B cell (primary cell): ENCODE measurements at regions of chr12 and their contacts with region 1.

Region 1: GRCh38 chr12:27821259-27821973 is 41.4 kb upstream of the MANSC4 start:
- DNase-seq: peak; percentile 65
- ATAC-seq: peak; percentile 23
- H3K4me3 ChIP-seq: no peak overlapping the region
- H3K4me3 Mint-ChIP-seq: no peak overlapping the region
- H3K27ac ChIP-seq: peak overlapping the region in 1 of 2 donors; percentile 2
- H3K27ac Mint-ChIP-seq: no peak overlapping the region
- H3K4me1 ChIP-seq: peaks cover 3 to 20% of the 10 kb centered on the region in 2 donors
- H3K4me1 Mint-ChIP-seq: peaks cover 35% of the 10 kb centered on the region
- H3K27me3 ChIP-seq: no peaks in the 10 kb centered on the region
- H3K27me3 Mint-ChIP-seq: peaks cover 9% of the 10 kb centered on the region
- CTCF ChIP-seq: peak; percentile 89

Region 2: DNA sequence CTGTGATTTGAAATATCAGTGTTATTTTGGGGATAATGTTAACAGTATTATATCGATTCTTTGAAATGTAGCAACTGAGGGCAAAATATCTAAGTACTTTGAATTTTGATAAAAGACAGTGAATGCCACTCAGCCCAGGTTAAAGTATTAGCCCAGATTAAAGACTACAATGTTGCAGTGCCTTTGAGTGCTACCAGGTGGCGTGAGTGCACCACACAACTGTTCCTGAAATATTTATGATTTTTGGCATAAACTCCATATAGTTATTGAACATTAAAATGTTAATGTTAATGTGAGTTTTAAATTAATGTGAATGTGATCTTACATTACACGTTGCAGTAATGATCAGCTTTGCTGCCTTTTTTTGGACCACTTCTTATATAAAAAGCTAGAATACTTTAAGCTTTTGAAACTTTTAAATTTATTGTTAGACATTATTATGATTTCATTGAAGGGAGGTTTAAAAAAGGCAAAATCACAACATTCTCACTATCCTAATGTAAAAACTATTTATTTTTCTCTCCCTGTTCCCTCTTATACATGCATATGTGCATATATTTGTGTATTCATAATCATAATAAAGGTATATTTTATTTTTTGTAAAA is 88.3 kb before region 1 on chr12:
- CTCF ChIA-PET with region 1: interaction called, 26 read pairs
- POLR2A ChIA-PET with region 1: no interaction called
- intact Hi-C with region 1: loop called (anchors 1 kb)
- DNase-seq: peak; percentile 39
- ATAC-seq: no peak
- H3K4me3 ChIP-seq: no peak overlapping the region
- H3K4me3 Mint-ChIP-seq: no peak overlapping the region
- H3K27ac ChIP-seq: no peak overlapping the region
- H3K27ac Mint-ChIP-seq: no peak overlapping the region
- H3K4me1 ChIP-seq: no peaks in the 10 kb centered on the region
- H3K4me1 Mint-ChIP-seq: no peaks in the 10 kb centered on the region
- H3K27me3 ChIP-seq: no peaks in the 10 kb centered on the region
- H3K27me3 Mint-ChIP-seq: no peaks in the 10 kb centered on the region
- CTCF ChIP-seq: peak; percentile 82

Region 3: GRCh38 chr12:27779920-27780611 is 41.4 kb before region 1 on chr12 and contains the starts of genes KLHL42 and MANSC4:
- CTCF ChIA-PET with region 1: interaction called, 4 read pairs
- POLR2A ChIA-PET with region 1: no interaction called
- intact Hi-C with region 1: loop called (anchors 1 kb)
- DNase-seq: peak; percentile 83
- ATAC-seq: peak; percentile 86
- H3K4me3 ChIP-seq: peak within 1 kb of the TSS; percentile 39 to 81 (median 67)
- H3K4me3 Mint-ChIP-seq: peak within 1 kb of the TSS; percentile 90
- H3K27ac ChIP-seq: peak within 1 kb of the TSS in 1 of 2 donors; percentile 69
- H3K27ac Mint-ChIP-seq: peak within 1 kb of the TSS; percentile 90
- H3K4me1 ChIP-seq: peaks cover 11 to 15% of the 10 kb centered on the region in 2 donors
- H3K4me1 Mint-ChIP-seq: peaks cover 29% of the 10 kb centered on the region
- H3K27me3 ChIP-seq: no peaks in the 10 kb centered on the region
- H3K27me3 Mint-ChIP-seq: no peaks in the 10 kb centered on the region
- CTCF ChIP-seq: no peak
- total RNA-seq, gene KLHL42: 20.5 and 21.9 TPM in 2 replicates
- total RNA-seq, gene MANSC4: not detected in 2 replicates

Region 4: DNA sequence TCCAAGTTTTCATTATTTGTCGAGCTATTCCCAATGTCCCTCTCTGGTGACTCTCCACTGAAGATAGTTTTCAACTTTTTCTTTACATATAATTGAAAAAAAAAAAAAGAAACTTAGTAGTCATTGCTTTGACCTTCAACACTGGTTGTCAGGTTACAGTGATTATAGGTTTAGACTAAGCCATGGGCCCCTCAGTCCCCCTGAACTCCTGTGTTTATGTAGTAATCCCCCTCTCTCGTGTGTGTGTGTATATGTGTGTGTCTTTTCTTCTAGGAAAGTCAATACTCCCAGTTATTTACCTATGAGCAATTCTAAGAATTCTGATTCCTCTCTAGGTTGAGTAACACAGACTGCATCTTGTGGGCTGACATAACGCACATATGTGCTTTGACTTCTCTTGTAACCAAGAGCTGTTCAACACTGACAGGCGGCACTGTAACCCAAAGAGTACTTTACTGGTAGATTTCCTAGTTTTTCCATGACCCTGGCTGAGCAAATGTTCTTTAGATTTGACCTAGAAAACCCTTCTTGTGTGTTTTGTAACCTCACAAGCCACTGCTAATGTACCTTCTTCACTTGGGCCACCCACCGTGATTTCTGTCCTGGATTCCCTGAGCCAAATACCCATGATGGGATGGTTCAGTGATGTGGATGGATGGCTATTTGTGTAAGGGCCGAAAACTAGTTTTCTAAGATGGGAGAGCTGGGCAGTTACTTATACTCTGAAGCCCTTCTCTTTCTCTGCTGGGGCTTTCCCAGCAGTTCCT is 26.4 kb before region 1 on chr12:
- CTCF ChIA-PET with region 1: interaction called, 10 read pairs
- POLR2A ChIA-PET with region 1: no interaction called
- intact Hi-C with region 1: no loop called
- DNase-seq: no peak
- ATAC-seq: no peak
- H3K4me3 ChIP-seq: no peak overlapping the region
- H3K4me3 Mint-ChIP-seq: no peak overlapping the region
- H3K27ac ChIP-seq: no peak overlapping the region
- H3K27ac Mint-ChIP-seq: no peak overlapping the region
- H3K4me1 ChIP-seq: no peaks in the 10 kb centered on the region
- H3K4me1 Mint-ChIP-seq: no peaks in the 10 kb centered on the region
- H3K27me3 ChIP-seq: no peaks in the 10 kb centered on the region
- H3K27me3 Mint-ChIP-seq: no peaks in the 10 kb centered on the region
- CTCF ChIP-seq: no peak

Region 5: DNA sequence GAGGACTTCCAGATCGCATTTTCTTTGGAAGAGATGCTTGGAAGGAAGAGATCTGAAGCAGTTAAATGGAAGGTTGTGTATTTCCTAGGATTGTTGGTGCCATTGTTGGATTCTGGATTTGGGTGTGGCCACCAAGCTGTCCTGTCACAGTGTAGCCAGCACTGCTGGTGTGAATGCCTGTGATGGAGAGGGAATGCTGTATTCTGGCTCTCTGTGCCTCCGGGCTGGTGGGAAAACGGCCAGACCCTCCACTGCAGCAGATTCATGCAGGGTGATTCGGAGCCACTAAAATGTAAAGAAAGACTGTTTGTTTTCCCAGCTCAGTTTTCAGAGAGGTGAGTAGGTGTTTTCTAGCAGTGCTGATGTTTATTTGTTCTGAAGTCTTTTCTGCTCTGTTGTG is 10.7 kb before region 1 on chr12:
- CTCF ChIA-PET with region 1: interaction called, 12 read pairs
- POLR2A ChIA-PET with region 1: no interaction called
- intact Hi-C with region 1: no loop called
- DNase-seq: no peak
- ATAC-seq: no peak
- H3K4me3 ChIP-seq: no peak overlapping the region
- H3K4me3 Mint-ChIP-seq: no peak overlapping the region
- H3K27ac ChIP-seq: no peak overlapping the region
- H3K27ac Mint-ChIP-seq: no peak overlapping the region
- H3K4me1 ChIP-seq: no peaks in the 10 kb centered on the region
- H3K4me1 Mint-ChIP-seq: peaks cover 2% of the 10 kb centered on the region
- H3K27me3 ChIP-seq: no peaks in the 10 kb centered on the region
- H3K27me3 Mint-ChIP-seq: peaks cover 12% of the 10 kb centered on the region
- CTCF ChIP-seq: no peak

Region 6: GRCh38 chr12:27940756-27941402 is 119.5 kb after region 1 on chr12:
- CTCF ChIA-PET with region 1: interaction called, 10 read pairs
- POLR2A ChIA-PET with region 1: no interaction called
- intact Hi-C with region 1: no loop called
- DNase-seq: peak; percentile 67
- ATAC-seq: peak; percentile 62
- H3K4me3 ChIP-seq: no peak overlapping the region
- H3K4me3 Mint-ChIP-seq: no peak overlapping the region
- H3K27ac ChIP-seq: no peak overlapping the region
- H3K27ac Mint-ChIP-seq: no peak overlapping the region
- H3K4me1 ChIP-seq: no peaks in the 10 kb centered on the region
- H3K4me1 Mint-ChIP-seq: no peaks in the 10 kb centered on the region
- H3K27me3 ChIP-seq: peaks cover 0 to 4% (median 1%) of the 10 kb centered on the region in 4 experiments
- H3K27me3 Mint-ChIP-seq: peaks cover 3% of the 10 kb centered on the region
- CTCF ChIP-seq: peak; percentile 86